T-cell (primary cell): ENCODE measurements at regions of chr18 and their contacts with region 1.

Region 1: GRCh38 chr18:63578357-63578958 is 8.7 kb upstream of the SERPINB13 start:
- DNase-seq: peak in 1 of 35 experiments; percentile 6
- ATAC-seq: no peak
- H3K4me3 ChIP-seq: no peak overlapping the region
- H3K4me3 Mint-ChIP-seq: no peak overlapping the region
- H3K27ac ChIP-seq: no peak overlapping the region
- H3K27ac Mint-ChIP-seq: no peak overlapping the region
- H3K4me1 ChIP-seq: no peaks in the 10 kb centered on the region
- H3K4me1 Mint-ChIP-seq: no peaks in the 10 kb centered on the region
- H3K27me3 ChIP-seq: no peaks in the 10 kb centered on the region
- H3K27me3 Mint-ChIP-seq: peaks cover 6 to 15% of the 10 kb centered on the region in 2 donors

Region 2: DNA sequence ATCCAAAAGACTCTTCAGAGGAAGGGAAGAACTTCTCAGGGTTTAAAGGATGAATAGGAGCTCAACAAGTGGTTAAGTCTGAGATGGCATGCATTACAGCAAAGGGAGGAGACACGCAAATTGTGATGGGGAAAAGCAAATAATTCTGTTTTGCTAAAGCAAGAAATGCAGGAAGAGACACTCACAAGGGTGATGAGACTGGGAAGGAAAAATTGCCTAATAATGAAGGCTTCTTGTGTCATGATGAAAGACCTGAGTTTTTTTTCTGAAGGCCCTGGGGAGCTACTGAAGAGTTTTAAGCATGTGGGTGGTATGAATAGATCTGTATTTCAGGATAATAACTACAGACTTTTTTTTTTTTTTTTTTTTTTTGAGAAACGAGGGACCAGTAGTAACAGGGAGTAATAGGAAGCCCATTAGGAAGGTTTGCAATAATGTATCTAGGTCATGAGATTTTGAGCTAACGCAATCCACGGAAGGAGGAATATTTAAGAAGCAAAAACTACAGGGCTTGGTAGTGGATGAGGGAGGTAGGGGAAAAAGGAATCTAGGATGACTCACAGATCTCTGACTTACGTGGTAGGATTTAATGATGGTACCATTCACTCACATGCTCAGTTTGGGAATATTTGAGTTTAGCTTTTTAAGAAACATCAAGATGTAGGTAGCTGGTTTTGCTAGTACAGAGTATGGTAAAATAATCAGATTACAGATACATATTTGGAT is 99.2 kb after region 1 on chr18:
- CTCF ChIA-PET with region 1: no interaction called
- POLR2A ChIA-PET with region 1: interaction called in 1 of 2 experiments, 20 read pairs
- DNase-seq: no peak
- ATAC-seq: no peak
- H3K4me3 ChIP-seq: no peak overlapping the region
- H3K4me3 Mint-ChIP-seq: no peak overlapping the region
- H3K27ac ChIP-seq: no peak overlapping the region
- H3K27ac Mint-ChIP-seq: no peak overlapping the region
- H3K4me1 ChIP-seq: no peaks in the 10 kb centered on the region
- H3K4me1 Mint-ChIP-seq: no peaks in the 10 kb centered on the region
- H3K27me3 ChIP-seq: no peaks in the 10 kb centered on the region
- H3K27me3 Mint-ChIP-seq: no peaks in the 10 kb centered on the region